ENCODE measurements at regions of chr16 and their contacts with region 1.

Region 1: DNA sequence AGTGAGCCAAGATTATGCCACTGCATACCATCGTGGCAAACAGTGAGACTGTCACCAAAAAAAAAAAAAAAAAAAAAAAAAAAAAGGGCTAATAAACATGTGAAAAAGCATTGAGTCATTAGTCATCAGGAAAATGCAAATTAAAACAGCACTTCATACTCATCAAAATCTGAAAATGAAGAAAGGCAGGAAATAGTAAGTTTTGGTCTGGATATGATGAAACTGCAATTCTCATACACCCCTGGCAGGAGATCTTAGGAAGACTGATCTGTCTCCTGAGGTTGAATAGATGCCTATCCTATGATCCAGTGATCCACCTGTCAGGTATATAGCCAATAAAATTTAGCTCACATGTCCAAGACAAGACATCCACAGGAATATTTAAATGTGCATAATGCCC is 212.7 kb downstream of the CPPED1 start:
- DNase-seq: no peak
- ATAC-seq: no peak
- H3K4me3 ChIP-seq: no peak overlapping the region
- H3K4me3 Mint-ChIP-seq: no peak overlapping the region
- H3K27ac ChIP-seq: no peak overlapping the region
- H3K27ac Mint-ChIP-seq: no peak overlapping the region
- H3K4me1 ChIP-seq: peaks cover 0 to 8% of the 10 kb centered on the region in 2 experiments
- H3K4me1 Mint-ChIP-seq: peaks cover 0 to 6% (median 0%) of the 10 kb centered on the region in 3 donors
- H3K27me3 ChIP-seq: no peaks in the 10 kb centered on the region
- H3K27me3 Mint-ChIP-seq: peaks cover 0 to 16% of the 10 kb centered on the region in 2 donors

Region 2: DNA sequence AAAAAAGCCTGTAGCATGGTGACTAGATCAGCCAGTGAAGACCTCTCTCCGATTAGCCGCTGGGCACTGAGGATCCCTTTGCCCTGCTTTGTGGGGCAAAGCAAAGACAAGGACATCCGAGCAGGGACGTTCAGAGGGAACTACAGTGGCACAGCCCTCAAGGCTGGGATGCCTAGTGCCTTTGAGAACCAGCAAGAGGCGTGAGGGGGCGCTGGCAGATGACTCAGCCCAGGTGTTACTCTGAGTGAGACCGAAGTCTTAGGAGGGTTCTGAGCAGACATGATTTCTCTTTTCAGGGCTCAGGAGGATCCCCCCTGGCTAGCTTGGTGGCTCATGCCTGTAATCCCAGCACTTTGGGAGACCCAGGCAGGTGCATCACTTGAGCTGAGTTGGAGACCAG is 34.1 kb after region 1 on chr16:
- CTCF ChIA-PET with region 1: no interaction called
- POLR2A ChIA-PET with region 1: no interaction called
- DNase-seq: no peak
- ATAC-seq: no peak
- H3K4me3 ChIP-seq: no peak overlapping the region
- H3K4me3 Mint-ChIP-seq: no peak overlapping the region
- H3K27ac ChIP-seq: no peak overlapping the region
- H3K27ac Mint-ChIP-seq: no peak overlapping the region
- H3K4me1 ChIP-seq: no peaks in the 10 kb centered on the region
- H3K4me1 Mint-ChIP-seq: no peaks in the 10 kb centered on the region
- H3K27me3 ChIP-seq: peaks cover 0 to 15% of the 10 kb centered on the region in 2 experiments
- H3K27me3 Mint-ChIP-seq: peaks cover 0 to 2% of the 10 kb centered on the region in 2 donors

Region 3: GRCh38 chr16:12646490-12647274 is 55.7 kb after region 1 on chr16:
- CTCF ChIA-PET with region 1: interaction called in 1 of 2 experiments, 13 read pairs
- POLR2A ChIA-PET with region 1: no interaction called
- DNase-seq: peak in 1 of 35 experiments; percentile 8
- ATAC-seq: peak; percentile 33 to 71 (median 60)
- H3K4me3 ChIP-seq: no peak overlapping the region
- H3K4me3 Mint-ChIP-seq: peak overlapping the region in 1 of 3 donors; percentile 16
- H3K27ac ChIP-seq: no peak overlapping the region
- H3K27ac Mint-ChIP-seq: peak overlapping the region; percentile 12 to 66
- H3K4me1 ChIP-seq: peaks cover 0 to 3% of the 10 kb centered on the region in 2 experiments
- H3K4me1 Mint-ChIP-seq: peaks cover 15 to 17% (median 17%) of the 10 kb centered on the region in 3 donors
- H3K27me3 ChIP-seq: peaks cover 0 to 3% of the 10 kb centered on the region in 2 experiments
- H3K27me3 Mint-ChIP-seq: no peaks in the 10 kb centered on the region

Measured in T-cell (primary cell).